IMR-90 (cell line): ENCODE measurements at regions of chr9 and their contacts with region 1.

Region 1: GRCh38 chr9:129776938-129777768 is 24.3 kb upstream of the PTGES start:
- DNase-seq: peak; percentile 100
- ATAC-seq: peak; percentile 95
- H3K4me3 ChIP-seq: peak overlapping the region; percentile 1; the same call in 1 of the 2 replicates
- H3K27ac ChIP-seq: peak overlapping the region; percentile 85
- H3K4me1 ChIP-seq: peaks cover 21% of the 10 kb centered on the region
- H3K27me3 ChIP-seq: no peaks in the 10 kb centered on the region
- CTCF ChIP-seq: no peak
- POLR2A ChIP-seq: peak; percentile 29
- RAD21 ChIP-seq: peak; percentile 30

Region 2: DNA sequence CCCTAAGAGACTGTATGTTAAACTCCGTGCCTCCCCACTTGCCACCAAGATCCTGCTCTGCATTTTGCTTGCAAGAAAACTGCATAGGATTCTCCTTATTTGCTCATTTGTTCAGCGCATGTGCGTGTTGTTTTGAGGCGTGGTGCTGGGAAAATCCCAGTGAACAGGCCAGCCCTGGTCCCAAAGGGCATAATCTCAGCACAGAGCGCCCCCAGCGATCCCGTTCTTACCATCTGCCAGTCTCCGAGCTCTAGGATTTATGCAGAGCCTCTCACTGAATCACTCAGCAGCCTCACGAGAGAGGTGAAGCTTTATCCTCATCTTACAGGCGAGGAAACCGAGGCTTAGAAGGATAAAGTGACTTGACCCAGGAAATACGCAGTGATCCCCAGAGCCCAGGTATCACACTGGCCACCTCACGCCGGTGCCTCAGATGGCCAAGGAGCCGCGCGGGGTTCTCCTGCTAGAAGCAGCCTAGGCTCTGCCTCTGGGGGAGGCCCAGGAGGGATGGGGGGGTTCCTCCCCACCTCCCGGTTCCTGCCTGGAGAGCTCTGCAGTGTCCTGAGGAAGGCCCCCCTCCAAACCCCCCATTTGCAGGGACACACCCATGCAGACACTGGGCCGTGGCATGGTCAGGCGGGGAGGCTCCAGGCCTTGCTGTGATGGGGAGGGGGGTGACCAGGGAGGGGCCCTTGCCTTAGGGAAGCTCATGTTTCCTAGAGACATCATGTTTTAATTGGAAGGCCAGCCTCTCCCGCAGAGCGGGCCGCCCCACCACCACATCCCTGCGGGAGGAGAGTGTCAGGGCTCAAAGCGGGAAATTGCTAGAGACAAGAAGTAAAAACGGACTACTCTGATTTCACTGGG is 99.9 kb before region 1 on chr9:
- CTCF ChIA-PET with region 1: no interaction called
- POLR2A ChIA-PET with region 1: no interaction called
- dilution Hi-C with region 1: no loop called
- in situ Hi-C with region 1: no loop called
- intact Hi-C with region 1: no loop called
- DNase-seq: no peak
- ATAC-seq: no peak
- H3K4me3 ChIP-seq: no peak overlapping the region
- H3K27ac ChIP-seq: no peak overlapping the region
- H3K4me1 ChIP-seq: no peaks in the 10 kb centered on the region; the same call in 1 of the 2 replicates
- H3K27me3 ChIP-seq: no peaks in the 10 kb centered on the region
- CTCF ChIP-seq: no peak
- POLR2A ChIP-seq: no peak
- RAD21 ChIP-seq: no peak

Region 3: DNA sequence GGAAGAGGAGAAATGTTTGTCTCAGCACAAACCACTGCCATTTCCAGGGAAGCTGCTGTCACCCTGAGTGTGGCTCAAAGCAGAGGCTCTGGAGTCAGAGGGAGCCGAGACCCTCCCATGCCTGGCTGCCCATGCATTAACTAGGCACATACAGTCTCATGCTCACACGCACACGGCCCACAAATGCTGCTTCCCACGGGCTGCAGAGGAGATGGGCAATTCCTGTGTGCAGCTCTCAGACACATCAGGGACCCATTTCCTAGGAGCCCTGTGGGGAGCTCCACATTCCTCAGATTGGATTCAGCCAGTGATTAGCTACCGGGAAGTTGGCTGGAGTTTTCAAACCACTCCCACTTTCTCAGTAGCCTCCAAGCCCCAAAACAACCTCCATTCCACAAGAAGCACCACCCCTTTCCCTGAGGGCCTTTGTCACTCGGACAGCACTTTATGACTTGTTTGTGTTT is 15.2 kb before region 1 on chr9:
- CTCF ChIA-PET with region 1: interaction called, 3 read pairs
- POLR2A ChIA-PET with region 1: no interaction called
- dilution Hi-C with region 1: no loop called
- in situ Hi-C with region 1: no loop called
- intact Hi-C with region 1: loop called (anchors 2 kb)
- DNase-seq: peak; percentile 83
- ATAC-seq: peak; percentile 66
- H3K4me3 ChIP-seq: no peak overlapping the region
- H3K27ac ChIP-seq: peak overlapping the region; percentile 98
- H3K4me1 ChIP-seq: peaks cover 18% of the 10 kb centered on the region
- H3K27me3 ChIP-seq: no peaks in the 10 kb centered on the region
- CTCF ChIP-seq: no peak
- POLR2A ChIP-seq: no peak
- RAD21 ChIP-seq: no peak